T-cell (primary cell): ENCODE measurements at regions of chr5 and their contacts with region 1.

Region 1: GRCh38 chr5:177390363-177391300 is 6.4 kb downstream of the SLC34A1 start:
- DNase-seq: peak; percentile 77 to 96 (median 84)
- ATAC-seq: peak; percentile 74 to 85 (median 80)
- H3K4me3 ChIP-seq: no peak overlapping the region
- H3K4me3 Mint-ChIP-seq: peak overlapping the region; percentile 25 to 58 (median 46)
- H3K27ac ChIP-seq: peak overlapping the region; percentile 89
- H3K27ac Mint-ChIP-seq: peak overlapping the region; percentile 89 to 91
- H3K4me1 ChIP-seq: peaks cover 19 to 54% of the 10 kb centered on the region in 2 experiments
- H3K4me1 Mint-ChIP-seq: peaks cover 37 to 40% (median 38%) of the 10 kb centered on the region in 3 donors
- H3K27me3 ChIP-seq: no peaks in the 10 kb centered on the region
- H3K27me3 Mint-ChIP-seq: no peaks in the 10 kb centered on the region

Region 2: DNA sequence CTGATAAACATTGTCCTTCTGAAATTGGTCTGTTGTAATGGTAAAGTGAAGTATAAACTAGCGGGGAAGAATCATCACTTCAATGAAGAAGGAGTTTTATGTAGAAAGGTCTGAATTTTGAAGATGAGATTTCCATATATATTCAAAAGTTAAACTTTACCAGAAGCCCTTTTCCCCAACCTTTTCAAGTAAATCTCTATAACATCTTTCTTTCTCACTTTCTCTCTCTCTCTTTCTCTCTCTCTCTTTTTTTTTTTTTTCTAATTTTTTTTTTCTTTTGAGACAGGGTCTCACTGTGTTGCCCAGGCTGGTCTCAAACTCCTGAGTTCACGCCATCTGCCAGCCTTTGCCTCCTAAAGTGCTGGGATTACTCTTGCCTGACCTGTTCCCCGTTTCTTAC is 178.4 kb before region 1 on chr5:
- CTCF ChIA-PET with region 1: no interaction called
- POLR2A ChIA-PET with region 1: no interaction called
- DNase-seq: no peak
- ATAC-seq: no peak
- H3K4me3 ChIP-seq: no peak overlapping the region
- H3K4me3 Mint-ChIP-seq: no peak overlapping the region
- H3K27ac ChIP-seq: no peak overlapping the region
- H3K27ac Mint-ChIP-seq: no peak overlapping the region
- H3K4me1 ChIP-seq: no peaks in the 10 kb centered on the region
- H3K4me1 Mint-ChIP-seq: peaks cover 13 to 18% (median 17%) of the 10 kb centered on the region in 3 donors
- H3K27me3 ChIP-seq: no peaks in the 10 kb centered on the region
- H3K27me3 Mint-ChIP-seq: no peaks in the 10 kb centered on the region

Region 3: DNA sequence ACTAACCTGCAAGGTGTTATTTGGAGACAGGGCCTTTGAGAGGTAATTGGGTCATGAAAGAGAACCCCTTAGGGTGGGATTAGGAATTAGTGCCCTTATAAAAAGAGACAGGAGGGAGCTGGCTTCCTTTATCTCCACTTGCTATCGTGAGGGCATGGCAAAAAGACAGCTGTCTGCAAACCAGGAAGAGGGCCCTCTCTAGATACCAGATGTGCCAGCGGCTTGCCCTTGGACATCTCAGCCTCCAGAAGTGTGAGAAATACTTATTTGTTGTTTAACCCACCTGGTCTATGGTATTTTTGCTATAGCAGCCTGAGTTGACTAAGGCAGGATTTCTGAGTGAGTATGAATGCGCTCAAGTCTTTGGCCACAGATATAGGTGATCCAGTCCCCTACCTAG is 33.9 kb before region 1 on chr5:
- CTCF ChIA-PET with region 1: interaction called, 4 read pairs
- POLR2A ChIA-PET with region 1: interaction called in 1 of 2 experiments, 15 read pairs
- DNase-seq: no peak
- ATAC-seq: no peak
- H3K4me3 ChIP-seq: peak overlapping the region in 1 of 2 donors; percentile 92
- H3K4me3 Mint-ChIP-seq: peak overlapping the region; percentile 77 to 91 (median 83)
- H3K27ac ChIP-seq: peak overlapping the region; percentile 73
- H3K27ac Mint-ChIP-seq: peak overlapping the region; percentile 89 to 97
- H3K4me1 ChIP-seq: peaks cover 43 to 72% of the 10 kb centered on the region in 2 experiments
- H3K4me1 Mint-ChIP-seq: peaks cover 65 to 76% (median 76%) of the 10 kb centered on the region in 3 donors
- H3K27me3 ChIP-seq: no peaks in the 10 kb centered on the region
- H3K27me3 Mint-ChIP-seq: no peaks in the 10 kb centered on the region

Region 4: GRCh38 chr5:177403792-177404640 is 13.4 kb after region 1 on chr5:
- CTCF ChIA-PET with region 1: interaction called, 12 to 100 read pairs
- POLR2A ChIA-PET with region 1: interaction called in 1 of 2 experiments, 3 read pairs
- DNase-seq: peak; percentile 70 to 92 (median 81)
- ATAC-seq: peak; percentile 78 to 81 (median 80)
- H3K4me3 ChIP-seq: peak overlapping the region; percentile 60
- H3K4me3 Mint-ChIP-seq: peak overlapping the region; percentile 75 to 85 (median 79)
- H3K27ac ChIP-seq: peak overlapping the region; percentile 54
- H3K27ac Mint-ChIP-seq: no peak overlapping the region
- H3K4me1 ChIP-seq: peaks cover 22 to 50% of the 10 kb centered on the region in 2 experiments
- H3K4me1 Mint-ChIP-seq: peaks cover 27 to 39% (median 32%) of the 10 kb centered on the region in 3 donors
- H3K27me3 ChIP-seq: peaks cover 7 to 20% of the 10 kb centered on the region in 2 experiments
- H3K27me3 Mint-ChIP-seq: no peaks in the 10 kb centered on the region

Region 5: GRCh38 chr5:177431317-177432142 is 40.9 kb after region 1 on chr5:
- CTCF ChIA-PET with region 1: interaction called, 4 to 23 read pairs
- POLR2A ChIA-PET with region 1: interaction called, 8 to 9 read pairs
- DNase-seq: peak in 34 of 35 experiments; percentile 54 to 85 (median 67)
- ATAC-seq: peak; percentile 29 to 49 (median 47)
- H3K4me3 ChIP-seq: peak overlapping the region; percentile 41 to 53
- H3K4me3 Mint-ChIP-seq: peak overlapping the region; percentile 79 to 92 (median 86)
- H3K27ac ChIP-seq: peak overlapping the region; percentile 84
- H3K27ac Mint-ChIP-seq: peak overlapping the region; percentile 95
- H3K4me1 ChIP-seq: peaks cover 64 to 95% of the 10 kb centered on the region in 2 experiments
- H3K4me1 Mint-ChIP-seq: peaks cover 61 to 84% (median 84%) of the 10 kb centered on the region in 3 donors
- H3K27me3 ChIP-seq: no peaks in the 10 kb centered on the region
- H3K27me3 Mint-ChIP-seq: no peaks in the 10 kb centered on the region

Region 6: GRCh38 chr5:177454397-177455035 is 63.9 kb after region 1 on chr5:
- CTCF ChIA-PET with region 1: interaction called, 14 to 94 read pairs
- POLR2A ChIA-PET with region 1: interaction called, 3 to 5 read pairs
- DNase-seq: peak; percentile 84 to 97 (median 92)
- ATAC-seq: peak; percentile 51 to 64 (median 56)
- H3K4me3 ChIP-seq: peak overlapping the region; percentile 49 to 68
- H3K4me3 Mint-ChIP-seq: peak overlapping the region; percentile 81 to 85 (median 82)
- H3K27ac ChIP-seq: peak overlapping the region; percentile 97
- H3K27ac Mint-ChIP-seq: peak overlapping the region in 1 of 2 donors; percentile 58
- H3K4me1 ChIP-seq: peaks cover 0 to 49% of the 10 kb centered on the region in 2 experiments
- H3K4me1 Mint-ChIP-seq: peaks cover 23 to 32% (median 28%) of the 10 kb centered on the region in 3 donors
- H3K27me3 ChIP-seq: peaks cover 0 to 4% of the 10 kb centered on the region in 2 experiments
- H3K27me3 Mint-ChIP-seq: no peaks in the 10 kb centered on the region

Region 7: DNA sequence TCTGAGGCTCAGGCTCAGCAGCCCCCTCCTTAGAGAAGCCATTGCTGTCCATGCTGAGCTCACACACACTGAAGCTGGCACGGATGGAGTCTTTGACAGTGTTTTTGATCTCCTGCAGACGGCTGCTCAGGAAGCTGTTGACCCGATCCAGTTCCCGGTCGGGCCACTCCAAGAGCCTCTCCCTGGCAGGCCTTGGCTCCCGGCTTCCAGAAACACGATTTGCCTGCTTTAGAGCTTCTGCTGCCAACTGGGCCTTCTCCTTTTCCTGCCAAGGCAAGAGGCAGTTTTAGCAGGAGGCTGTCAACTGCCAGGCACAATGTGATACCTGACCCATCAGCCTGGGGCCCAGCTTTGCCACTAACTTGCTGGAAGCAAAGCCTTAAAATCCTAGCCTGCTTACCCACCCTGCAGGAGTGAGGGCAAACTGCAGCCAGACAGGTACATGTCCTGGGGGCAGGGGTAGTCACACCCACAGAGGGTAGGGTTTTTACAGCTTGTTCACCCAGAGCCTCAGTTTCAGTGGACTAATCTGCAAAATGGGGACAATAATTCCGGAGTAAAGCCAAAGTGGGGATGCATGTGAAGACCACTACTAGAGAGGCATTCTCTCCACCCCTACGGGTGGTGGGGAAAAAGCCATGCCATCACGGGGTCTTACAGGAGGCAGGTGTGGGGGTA is 134.4 kb after region 1 on chr5:
- CTCF ChIA-PET with region 1: no interaction called
- POLR2A ChIA-PET with region 1: no interaction called
- DNase-seq: no peak
- ATAC-seq: no peak
- H3K4me3 ChIP-seq: no peak overlapping the region
- H3K4me3 Mint-ChIP-seq: no peak overlapping the region
- H3K27ac ChIP-seq: no peak overlapping the region
- H3K27ac Mint-ChIP-seq: no peak overlapping the region
- H3K4me1 ChIP-seq: peaks cover 0 to 15% of the 10 kb centered on the region in 2 experiments
- H3K4me1 Mint-ChIP-seq: peaks cover 15 to 16% (median 16%) of the 10 kb centered on the region in 3 donors
- H3K27me3 ChIP-seq: no peaks in the 10 kb centered on the region
- H3K27me3 Mint-ChIP-seq: no peaks in the 10 kb centered on the region